ENCODE measurements at regions of chr11 and their contacts with region 1.

Region 1: DNA sequence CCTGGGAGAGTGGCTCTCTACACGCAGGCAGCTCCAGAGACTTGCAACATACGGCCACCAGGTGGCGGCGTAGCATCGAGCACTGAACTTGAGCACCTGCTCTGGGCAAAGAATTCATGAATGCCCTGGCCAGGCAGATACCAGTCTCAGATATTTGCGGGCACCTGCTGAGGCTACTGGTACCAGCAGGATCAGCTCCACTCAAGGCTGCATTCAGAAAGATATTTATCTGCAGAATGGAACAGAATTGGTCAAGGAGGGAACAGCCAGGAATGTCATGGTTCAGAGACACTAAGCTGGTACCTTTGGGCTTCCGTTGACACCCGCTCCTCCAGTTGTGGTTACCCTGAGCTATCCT is 10.8 kb upstream of the CCDC86 start:
- DNase-seq: peak; percentile 74 to 91
- ATAC-seq: peak; percentile 82 to 95 (median 95)
- H3K4me3 ChIP-seq: no peak overlapping the region
- H3K4me3 Mint-ChIP-seq: no peak overlapping the region
- H3K27ac ChIP-seq: no peak overlapping the region
- H3K27ac Mint-ChIP-seq: peak overlapping the region in 1 of 2 donors; percentile 82
- H3K4me1 ChIP-seq: peaks cover 10% of the 10 kb centered on the region
- H3K4me1 Mint-ChIP-seq: peaks cover 0 to 5% of the 10 kb centered on the region in 2 donors
- H3K27me3 ChIP-seq: no peaks in the 10 kb centered on the region
- H3K27me3 Mint-ChIP-seq: peaks cover 0 to 15% of the 10 kb centered on the region in 2 donors
- CTCF ChIP-seq: peak; percentile 96

Region 2: GRCh38 chr11:60657888-60658287 is 173.2 kb before region 1 on chr11:
- intact Hi-C with region 1: no loop called
- DNase-seq: no peak
- ATAC-seq: no peak
- H3K4me3 ChIP-seq: no peak overlapping the region
- H3K4me3 Mint-ChIP-seq: no peak overlapping the region
- H3K27ac ChIP-seq: no peak overlapping the region
- H3K27ac Mint-ChIP-seq: no peak overlapping the region
- H3K4me1 ChIP-seq: no peaks in the 10 kb centered on the region
- H3K4me1 Mint-ChIP-seq: no peaks in the 10 kb centered on the region
- H3K27me3 ChIP-seq: no peaks in the 10 kb centered on the region
- H3K27me3 Mint-ChIP-seq: peaks cover 0 to 21% of the 10 kb centered on the region in 2 donors
- CTCF ChIP-seq: no peak

Region 3: DNA sequence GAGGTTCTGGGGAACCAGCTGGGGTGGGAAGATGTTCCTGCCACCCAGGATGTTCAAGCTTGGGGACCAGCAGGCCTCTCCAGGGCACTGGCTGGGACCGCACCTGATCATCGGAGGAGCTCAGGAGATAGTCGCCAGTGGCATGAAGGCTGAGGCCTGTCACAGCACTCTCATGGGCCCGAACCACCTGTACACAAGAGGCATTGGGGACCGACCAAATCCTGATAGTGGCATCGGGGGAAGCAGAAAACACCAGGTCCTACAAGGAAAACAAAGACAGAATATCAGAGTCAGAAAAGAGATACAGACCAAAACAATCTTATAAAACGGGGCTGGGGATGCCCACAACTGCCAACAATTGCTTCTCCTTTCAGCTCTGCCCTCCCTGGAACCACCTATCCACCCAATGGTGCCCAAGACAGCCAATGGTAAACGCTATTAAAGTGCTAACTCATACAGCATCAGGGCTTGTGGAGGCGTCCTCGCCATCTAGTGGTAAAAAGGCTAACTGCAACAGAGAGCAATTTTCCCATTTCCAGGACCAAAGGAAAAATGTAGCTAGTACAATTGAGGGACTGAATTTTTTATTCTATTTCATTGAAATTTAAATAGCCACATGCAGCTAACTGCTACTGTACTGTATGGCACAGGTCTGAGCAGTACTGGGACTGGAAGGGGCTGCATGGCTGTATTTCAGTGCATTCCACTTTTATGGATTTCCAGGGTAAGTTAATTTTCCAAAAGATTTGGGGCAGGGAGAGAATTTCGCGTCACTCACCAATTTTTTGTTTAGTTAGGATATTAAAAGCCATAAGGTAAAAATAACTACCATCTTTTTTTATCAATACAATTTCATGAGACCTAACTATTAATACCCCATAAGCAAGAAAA is 68.2 kb after region 1 on chr11:
- intact Hi-C with region 1: loop called (anchors 1 kb)
- DNase-seq: peak in 1 of 2 donors; percentile 75
- ATAC-seq: peak; percentile 79 to 84 (median 81)
- H3K4me3 ChIP-seq: no peak overlapping the region
- H3K4me3 Mint-ChIP-seq: no peak overlapping the region
- H3K27ac ChIP-seq: no peak overlapping the region
- H3K27ac Mint-ChIP-seq: peak overlapping the region in 1 of 2 donors; percentile 38
- H3K4me1 ChIP-seq: peaks cover under 1% of the 10 kb centered on the region
- H3K4me1 Mint-ChIP-seq: peaks cover 10 to 13% of the 10 kb centered on the region in 2 donors
- H3K27me3 ChIP-seq: no peaks in the 10 kb centered on the region
- H3K27me3 Mint-ChIP-seq: no peaks in the 10 kb centered on the region
- CTCF ChIP-seq: peak; percentile 73

Region 4: DNA sequence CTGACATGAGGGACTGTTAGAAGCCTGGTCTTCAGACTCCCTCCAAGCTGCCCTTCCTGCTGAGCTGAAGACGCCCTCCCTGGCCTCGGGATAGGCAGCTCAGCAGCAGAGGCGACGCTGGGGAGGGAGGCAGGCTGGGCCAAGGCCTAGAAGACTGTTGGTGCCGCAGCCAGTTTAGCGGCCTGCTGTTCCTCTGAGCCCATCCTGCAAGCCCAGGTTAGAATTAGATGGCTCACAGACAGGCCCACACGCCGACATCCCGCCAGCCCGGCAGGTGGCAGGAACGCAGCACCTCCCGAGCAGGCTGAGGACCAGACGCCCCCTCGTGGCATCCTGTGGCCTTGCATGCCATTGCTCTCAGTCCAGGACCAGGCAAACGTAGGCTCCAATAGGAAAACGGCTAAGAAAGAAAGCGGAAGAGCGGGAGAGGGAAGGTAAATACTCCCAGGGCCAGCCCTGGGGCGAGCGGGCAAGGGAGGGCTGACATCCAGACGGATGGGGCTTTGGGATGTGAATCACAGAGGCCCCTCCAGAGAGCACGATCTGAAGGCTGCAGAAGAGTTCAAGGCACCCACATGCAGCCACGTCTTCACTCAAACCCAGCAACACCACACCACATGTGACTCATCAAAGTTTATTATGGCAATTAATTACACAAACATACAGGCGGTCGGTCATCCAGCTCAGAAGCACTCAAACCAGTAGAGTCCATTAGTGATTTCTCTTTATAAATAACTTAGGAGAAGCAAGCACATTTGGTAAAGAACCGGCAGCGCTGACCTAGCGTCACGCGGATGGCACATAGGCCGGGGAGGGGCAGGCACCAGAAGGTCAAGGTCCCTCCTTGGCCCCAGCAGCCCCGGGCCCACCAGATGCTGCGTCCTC is 298.8 kb after region 1 on chr11:
- intact Hi-C with region 1: loop called (anchors 1 kb)
- DNase-seq: peak; percentile 81 to 95
- ATAC-seq: peak; percentile 95 to 100 (median 99)
- H3K4me3 ChIP-seq: no peak overlapping the region
- H3K4me3 Mint-ChIP-seq: no peak overlapping the region
- H3K27ac ChIP-seq: no peak overlapping the region
- H3K27ac Mint-ChIP-seq: peak overlapping the region in 1 of 2 donors; percentile 37
- H3K4me1 ChIP-seq: peaks cover 12% of the 10 kb centered on the region
- H3K4me1 Mint-ChIP-seq: peaks cover 6% of the 10 kb centered on the region in 2 donors
- H3K27me3 ChIP-seq: no peaks in the 10 kb centered on the region
- H3K27me3 Mint-ChIP-seq: peaks cover 0 to 7% of the 10 kb centered on the region in 2 donors
- CTCF ChIP-seq: peak; percentile 100